Vagina (tissue), 2 donors: ENCODE measurements at regions of chr21 and their contacts with region 1.

Region 1: GRCh38 chr21:15631366-15631765 is 98.4 kb upstream of the USP25 start:
- DNase-seq: no peak
- H3K4me3 ChIP-seq: no peak overlapping the region
- H3K27ac ChIP-seq: no peak overlapping the region
- H3K4me1 ChIP-seq: no peaks in the 10 kb centered on the region
- H3K27me3 ChIP-seq: no peaks in the 10 kb centered on the region
- CTCF ChIP-seq: no peak
- POLR2A ChIP-seq: no peak

Region 2: DNA sequence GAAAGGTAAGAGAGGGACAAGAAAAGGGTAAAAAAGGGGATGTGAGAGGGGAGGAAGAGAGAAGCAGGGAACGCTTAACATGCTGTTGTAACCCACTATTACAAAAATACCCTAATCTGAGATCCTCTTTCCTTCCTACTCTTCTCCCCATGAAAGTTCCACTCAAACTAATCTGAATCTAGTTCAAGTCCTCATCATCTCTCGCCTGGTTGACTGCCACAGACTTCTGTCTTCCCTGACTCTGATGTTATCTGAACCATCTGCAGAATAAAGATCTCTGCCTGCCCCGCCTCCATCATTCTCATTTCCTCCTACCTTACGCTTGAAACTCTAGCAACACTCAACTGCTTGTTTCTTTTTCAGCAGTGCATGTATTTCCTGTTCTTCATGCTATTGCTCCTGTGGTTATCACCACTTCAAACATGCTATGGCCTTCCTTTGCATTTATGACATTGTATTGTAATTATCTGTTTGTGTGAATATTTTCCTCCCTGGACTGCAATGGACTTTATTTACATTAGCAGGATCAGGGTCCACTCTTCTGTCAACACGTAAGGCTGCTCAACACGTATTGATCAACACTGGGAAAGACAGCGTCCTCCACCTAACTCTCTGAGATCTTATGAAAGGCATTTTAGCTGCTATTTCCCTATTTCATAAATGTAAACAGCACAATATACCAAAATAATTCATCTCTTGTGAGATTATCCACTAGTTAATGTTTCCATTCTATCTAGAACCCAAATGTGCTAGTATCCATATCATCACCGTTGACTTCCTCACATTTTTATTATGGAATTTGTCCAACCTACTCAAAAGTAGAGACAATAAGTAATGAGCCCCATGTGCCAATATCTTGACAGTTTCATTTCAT is 117.1 kb before region 1 on chr21:
- intact Hi-C with region 1: no loop called
- DNase-seq: no peak
- H3K4me3 ChIP-seq: no peak overlapping the region
- H3K27ac ChIP-seq: no peak overlapping the region
- H3K4me1 ChIP-seq: no peaks in the 10 kb centered on the region
- H3K27me3 ChIP-seq: no peaks in the 10 kb centered on the region
- CTCF ChIP-seq: no peak
- POLR2A ChIP-seq: no peak

Region 3: GRCh38 chr21:16330082-16330907 is 698.9 kb after region 1 on chr21:
- intact Hi-C with region 1: loop called (anchors 5 kb)
- DNase-seq: no peak
- H3K4me3 ChIP-seq: peak overlapping the region in 1 of 2 donors; percentile 2
- H3K27ac ChIP-seq: peak overlapping the region; percentile 78
- H3K4me1 ChIP-seq: peaks cover 10% of the 10 kb centered on the region
- H3K27me3 ChIP-seq: no peaks in the 10 kb centered on the region
- CTCF ChIP-seq: peak; percentile 34 to 67 (median 58)
- POLR2A ChIP-seq: no peak